Activated CD4-positive, alpha-beta T cell treated with anti-CD3 and anti-CD28 coated beads for 36 hours (primary cell): ENCODE measurements at regions of chr15 and their contacts with region 1.

Region 1: DNA sequence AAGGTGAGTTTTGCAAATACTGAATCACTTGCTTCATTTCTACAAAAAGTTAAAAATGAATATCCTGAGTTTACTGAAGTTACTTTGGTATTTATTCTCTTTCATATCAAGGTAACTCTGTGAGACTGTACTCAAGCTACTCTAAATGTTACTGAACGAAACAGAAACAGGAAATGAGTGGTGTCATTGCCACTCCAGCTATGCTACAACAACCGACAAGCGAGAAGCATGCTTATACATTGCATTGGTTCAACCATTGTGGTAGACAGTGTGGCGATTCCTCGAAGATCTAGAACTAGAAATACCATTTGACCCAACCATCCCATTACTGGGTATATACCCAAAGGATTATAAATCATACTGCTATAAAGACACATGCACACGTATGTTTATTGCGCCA is 313.2 kb upstream of the THBS1 start:
- DNase-seq: no peak
- ATAC-seq: peak; percentile 51
- H3K4me3 Mint-ChIP-seq: no peak overlapping the region
- H3K27ac Mint-ChIP-seq: no peak overlapping the region
- H3K4me1 Mint-ChIP-seq: peaks cover 4% of the 10 kb centered on the region
- H3K27me3 Mint-ChIP-seq: peaks cover 4% of the 10 kb centered on the region

Region 2: DNA sequence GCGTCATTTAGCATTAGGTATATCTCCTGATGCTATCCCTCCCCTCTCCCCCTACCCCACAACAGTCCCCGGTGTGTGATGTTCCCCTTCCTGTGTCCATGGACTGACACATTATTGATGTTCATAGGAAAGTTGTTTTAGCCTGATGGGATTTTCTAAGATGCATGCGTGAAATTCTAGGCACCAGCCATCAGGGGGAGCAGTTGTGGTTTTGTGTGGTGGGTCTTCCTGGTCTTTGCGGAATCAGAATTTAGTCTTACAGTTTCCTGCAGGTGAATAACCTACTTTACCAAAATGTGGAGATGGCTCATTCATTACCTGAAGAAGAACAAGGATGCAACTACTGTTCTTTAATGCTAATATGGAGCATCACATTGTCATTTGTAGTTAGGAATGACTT is 141.8 kb before region 1 on chr15:
- CTCF ChIA-PET with region 1: no interaction called
- POLR2A ChIA-PET with region 1: no interaction called
- intact Hi-C with region 1: loop called in 1 of 2 experiments (anchors 5 kb)
- DNase-seq: peak; percentile 56
- ATAC-seq: no peak
- H3K4me3 Mint-ChIP-seq: no peak overlapping the region
- H3K27ac Mint-ChIP-seq: no peak overlapping the region
- H3K4me1 Mint-ChIP-seq: no peaks in the 10 kb centered on the region
- H3K27me3 Mint-ChIP-seq: peaks cover 7% of the 10 kb centered on the region

Region 3: DNA sequence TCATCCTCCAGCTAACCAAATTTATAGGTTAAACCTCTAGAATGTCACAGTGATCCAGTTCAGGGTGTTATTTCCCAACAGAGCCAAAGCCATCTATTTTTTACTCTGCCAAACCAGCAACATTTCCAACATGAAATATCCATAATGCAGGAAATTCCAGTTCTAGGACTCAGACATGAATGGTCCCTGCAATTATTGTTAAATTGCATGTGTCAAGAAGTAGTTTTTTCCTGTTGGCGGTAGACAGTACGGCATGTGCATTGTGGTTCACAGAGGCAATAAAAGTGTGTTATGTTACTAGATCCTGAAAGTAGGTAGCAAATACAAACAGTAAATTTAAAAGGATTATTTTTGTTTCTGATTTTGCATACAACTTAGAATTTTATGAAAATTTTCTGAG is 97.5 kb after region 1 on chr15:
- CTCF ChIA-PET with region 1: no interaction called
- POLR2A ChIA-PET with region 1: no interaction called
- intact Hi-C with region 1: no loop called
- DNase-seq: no peak
- ATAC-seq: no peak
- H3K4me3 Mint-ChIP-seq: no peak overlapping the region
- H3K27ac Mint-ChIP-seq: no peak overlapping the region
- H3K4me1 Mint-ChIP-seq: no peaks in the 10 kb centered on the region
- H3K27me3 Mint-ChIP-seq: peaks cover 9% of the 10 kb centered on the region